Left colon (tissue), 2 donors: ENCODE measurements at regions of chr1 and their contacts with region 1.

Region 1: DNA sequence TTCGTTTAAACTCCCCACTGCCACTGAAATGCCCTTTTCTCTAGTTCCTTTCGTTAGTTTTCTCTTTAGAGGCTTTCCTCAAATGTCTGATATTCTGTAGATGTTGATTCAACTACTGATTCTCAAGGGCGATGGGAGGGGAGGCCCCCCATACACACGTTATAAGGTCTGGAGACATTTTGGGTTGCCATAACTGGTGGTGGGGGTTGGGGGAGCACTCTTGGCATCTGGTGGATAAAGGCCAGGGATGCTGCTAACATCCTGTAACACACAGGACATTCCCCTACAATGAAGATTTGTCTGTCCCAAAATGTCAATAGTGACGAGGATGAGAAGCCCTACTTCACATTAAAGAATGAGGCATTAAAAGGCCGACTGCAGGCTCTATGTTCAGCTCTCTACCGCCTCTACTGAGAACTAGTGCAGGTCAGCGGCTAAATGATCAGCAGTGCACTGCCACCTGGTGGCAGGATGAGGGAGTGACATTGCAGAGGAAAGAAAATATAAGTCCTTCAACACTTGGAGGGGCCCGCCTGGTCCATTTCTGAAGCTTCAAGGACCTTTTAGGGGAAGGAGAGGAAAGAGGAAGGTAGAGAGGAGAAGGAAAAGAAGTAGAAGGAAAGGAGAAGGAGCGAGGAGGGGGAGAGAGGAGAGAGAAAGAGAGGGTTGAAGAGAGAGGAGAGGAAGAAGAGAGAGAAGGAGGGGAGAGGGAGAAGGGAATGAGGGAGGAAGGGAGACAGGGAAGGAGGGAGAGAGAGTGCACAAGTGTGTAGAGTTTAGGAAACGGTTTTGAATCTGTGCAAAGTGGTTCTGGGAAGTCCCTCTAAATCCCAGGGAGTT is 29.4 kb downstream of the ALG14 start:
- DNase-seq: peak; percentile 75 to 83
- ATAC-seq: peak; percentile 77

Region 2: GRCh38 chr1:94854458-94855306 is 188.7 kb before region 1 on chr1:
- intact Hi-C with region 1: loop called (anchors 2 to 5 kb)
- DNase-seq: peak; percentile 88 to 89
- ATAC-seq: peak; percentile 91